Motor neuron (in vitro differentiated cells): ENCODE measurements at regions of chr2 and their contacts with region 1.

Region 1: DNA sequence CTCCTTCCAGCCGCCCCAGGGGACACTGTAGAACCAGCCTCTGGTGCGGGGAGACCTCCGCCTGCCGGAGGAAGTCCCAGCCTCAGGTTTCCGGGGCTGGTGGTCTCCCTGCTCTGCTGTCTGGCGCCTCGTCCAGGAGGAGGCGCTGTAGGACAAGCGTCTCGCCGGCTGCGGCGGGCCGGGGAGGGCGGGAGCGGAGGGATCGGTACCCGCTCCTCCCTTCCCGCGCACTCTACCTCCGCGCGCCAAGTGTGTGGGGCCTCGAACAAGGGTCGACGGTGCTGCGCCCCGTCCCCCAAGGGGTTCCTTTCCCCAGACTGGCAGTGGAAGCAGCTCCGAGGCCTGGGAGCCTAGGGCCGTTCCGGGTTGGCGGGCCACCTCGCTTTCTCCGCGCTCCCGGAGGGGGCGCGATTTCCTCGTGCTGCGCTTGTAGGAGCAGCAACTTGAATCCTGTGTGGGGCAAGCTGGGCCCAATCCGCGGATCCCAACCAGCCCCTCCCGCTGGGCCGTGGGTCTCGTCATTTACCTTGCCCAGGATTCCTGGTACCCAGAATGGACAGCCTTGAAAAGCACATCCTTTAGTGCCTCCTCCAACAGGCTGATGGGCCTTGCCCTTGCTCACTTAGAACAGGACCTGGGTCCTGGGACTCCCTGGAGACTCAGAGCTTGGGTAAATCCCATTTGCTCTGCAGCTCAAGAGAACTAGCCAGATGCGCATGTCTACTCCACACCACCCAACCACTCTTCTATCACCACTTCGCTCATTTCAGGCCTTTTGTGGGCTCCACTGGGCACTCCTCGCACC is 10.6 kb upstream of the HOXD4 start:
- ATAC-seq: peak; percentile 54 to 83 (median 80)
- H3K4me3 ChIP-seq: peak overlapping the region; percentile 62 to 99 (median 97)
- H3K27ac ChIP-seq: peak overlapping the region; percentile 70 to 100
- H3K4me1 ChIP-seq: peaks cover 49 to 59% of the 10 kb centered on the region in 2 donors

Region 2: GRCh38 chr2:176242276-176242675 is 101.6 kb after region 1 on chr2:
- in situ Hi-C with region 1: no loop called
- ATAC-seq: no peak
- H3K4me3 ChIP-seq: no peak overlapping the region
- H3K27ac ChIP-seq: no peak overlapping the region
- H3K4me1 ChIP-seq: peaks cover 0 to 10% of the 10 kb centered on the region in 2 donors

Region 3: DNA sequence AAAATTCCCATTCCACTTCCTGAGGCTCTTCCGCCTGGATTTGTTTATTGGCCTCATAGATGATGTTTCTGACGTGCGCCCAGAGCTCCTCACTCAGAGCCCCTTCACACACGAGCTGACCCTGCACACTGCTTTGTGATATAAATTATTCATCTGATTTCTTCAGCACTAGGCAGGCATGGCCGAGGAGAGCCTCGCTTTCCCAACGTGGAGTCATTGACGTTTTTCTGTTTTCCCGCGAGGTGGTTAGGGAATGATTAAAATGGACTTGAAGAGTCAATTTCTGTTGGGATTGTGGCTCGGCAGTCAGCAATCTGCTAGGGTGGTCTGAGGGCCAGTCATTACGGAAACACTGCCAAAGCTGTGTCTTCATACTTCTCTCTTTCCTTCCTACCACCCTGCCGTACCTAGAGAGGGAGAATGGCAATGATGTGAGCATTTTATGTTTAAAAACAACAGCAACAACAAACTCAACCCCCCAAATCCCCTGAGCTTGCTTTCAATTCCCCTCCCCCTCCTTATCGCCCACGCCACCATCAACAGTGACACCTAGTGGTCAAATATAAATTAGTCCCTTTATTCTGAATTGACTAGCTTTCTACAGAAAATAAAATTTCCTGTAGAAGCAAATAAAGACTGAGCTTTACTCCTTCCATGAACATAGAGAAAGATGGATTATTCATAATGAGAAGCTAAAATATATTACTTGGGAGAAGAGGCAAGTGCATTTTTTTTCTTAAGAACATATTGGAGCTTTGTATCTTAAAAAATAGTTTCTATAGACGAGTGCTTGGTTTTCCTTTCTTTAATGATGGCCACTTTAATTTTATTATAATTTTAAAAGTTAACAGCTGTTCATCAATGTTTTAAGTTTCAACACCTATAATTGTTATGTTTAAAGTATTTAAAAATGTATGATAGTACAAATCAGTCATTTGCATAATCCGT is 413.7 kb after region 1 on chr2:
- in situ Hi-C with region 1: loop called in 5 of 9 experiments (anchors 10 to 25 kb)
- ATAC-seq: peak; percentile 61 to 95 (median 88)
- H3K4me3 ChIP-seq: peak overlapping the region; percentile 11 to 38 (median 28)
- H3K27ac ChIP-seq: peak overlapping the region; percentile 35 to 90
- H3K4me1 ChIP-seq: peaks cover 12 to 21% of the 10 kb centered on the region in 2 donors

Region 4: DNA sequence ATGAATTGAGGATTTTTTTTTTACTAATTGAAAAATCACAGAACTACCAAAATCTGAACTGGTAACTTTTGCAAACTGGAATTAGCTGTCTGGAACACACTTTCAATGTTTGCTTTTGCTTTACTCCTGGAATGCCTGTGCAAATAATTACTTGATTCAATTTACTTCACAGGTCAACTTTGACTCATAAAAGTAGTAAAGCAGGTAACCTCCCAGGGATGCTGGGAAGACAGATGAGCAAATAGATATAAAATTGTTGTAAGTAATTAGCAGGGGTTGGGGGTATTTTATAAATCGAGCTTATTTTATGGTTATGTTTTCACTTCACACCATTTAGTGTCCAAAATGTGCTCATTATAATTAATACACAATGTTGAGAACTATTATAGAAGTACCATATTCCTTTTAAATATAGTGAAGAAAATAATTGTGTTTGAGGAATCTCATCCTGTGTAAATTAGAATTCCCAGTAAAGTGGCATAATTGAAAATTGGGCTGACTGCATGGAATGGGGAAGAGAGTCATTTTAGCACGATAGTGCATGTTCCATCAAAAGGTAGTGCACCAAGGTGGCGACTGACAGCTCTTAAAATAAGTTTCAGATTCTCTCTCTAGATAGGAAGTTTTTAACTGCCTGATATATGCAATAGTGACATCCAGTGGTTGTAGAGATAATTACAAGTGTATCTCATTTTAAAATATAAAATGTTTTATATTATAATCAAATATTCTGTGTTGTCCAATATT is 673.8 kb after region 1 on chr2:
- in situ Hi-C with region 1: loop called in 2 of 9 experiments (anchors 25 kb)
- ATAC-seq: no peak
- H3K4me3 ChIP-seq: no peak overlapping the region
- H3K27ac ChIP-seq: no peak overlapping the region
- H3K4me1 ChIP-seq: peaks cover 33 to 40% of the 10 kb centered on the region in 2 donors

Region 5: GRCh38 chr2:177148477-177149154 is 1007.9 kb after region 1 on chr2:
- in situ Hi-C with region 1: loop called in 2 of 9 experiments (anchors 25 kb)
- ATAC-seq: peak; percentile 99 to 100 (median 100)
- H3K4me3 ChIP-seq: peak overlapping the region; percentile 32 to 43 (median 34)
- H3K27ac ChIP-seq: no peak overlapping the region
- H3K4me1 ChIP-seq: peaks cover 2 to 21% of the 10 kb centered on the region in 2 donors

Region 6: DNA sequence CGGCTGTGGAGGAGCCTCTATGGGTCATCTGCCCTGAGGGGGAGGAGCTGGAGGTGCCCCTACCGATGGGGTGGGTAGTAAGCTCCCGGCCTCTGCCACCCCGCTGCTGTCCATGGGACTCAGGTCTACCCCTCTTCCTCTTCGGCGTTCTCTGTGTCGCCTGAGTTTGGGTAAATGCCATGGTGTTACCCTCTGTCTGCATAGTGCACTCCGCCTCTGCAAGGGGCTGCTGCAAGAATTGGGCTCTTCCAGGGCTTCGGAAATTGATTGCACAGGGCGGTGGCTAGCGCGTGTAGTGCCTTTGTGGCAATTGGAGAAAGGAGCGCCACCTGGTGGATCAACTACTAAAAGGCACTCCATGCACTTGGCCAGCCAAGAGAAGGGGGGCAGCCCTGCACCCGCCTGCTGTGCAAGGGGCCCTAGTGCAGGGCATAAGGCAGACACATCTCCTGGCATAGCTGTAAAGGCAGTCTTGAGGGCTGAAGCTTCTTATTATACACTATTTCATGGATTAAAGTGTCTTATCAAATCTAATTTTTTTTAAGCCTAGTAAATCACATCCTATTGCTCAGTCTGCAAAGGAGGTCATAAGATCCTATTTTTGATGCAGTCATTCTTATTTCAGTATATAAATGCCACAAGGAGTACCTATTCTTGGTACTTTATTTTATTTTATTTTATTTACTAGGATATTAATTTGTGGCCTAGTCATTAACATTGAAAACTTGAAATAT is 1623.0 kb after region 1 on chr2:
- in situ Hi-C with region 1: loop called in 2 of 9 experiments (anchors 25 kb)
- ATAC-seq: peak; percentile 86 to 98 (median 90)
- H3K4me3 ChIP-seq: no peak overlapping the region
- H3K27ac ChIP-seq: no peak overlapping the region
- H3K4me1 ChIP-seq: peaks cover 5 to 17% of the 10 kb centered on the region in 2 donors